Left colon (tissue), 2 donors: ENCODE measurements at regions of chr21 and their contacts with region 1.

Region 1: GRCh38 chr21:26845066-26845758 is at the start of gene ADAMTS1:
- DNase-seq: peak; percentile 51 to 72
- ATAC-seq: peak; percentile 22
- total RNA-seq, gene ADAMTS1: 12.6 to 20.6 TPM

Region 2: DNA sequence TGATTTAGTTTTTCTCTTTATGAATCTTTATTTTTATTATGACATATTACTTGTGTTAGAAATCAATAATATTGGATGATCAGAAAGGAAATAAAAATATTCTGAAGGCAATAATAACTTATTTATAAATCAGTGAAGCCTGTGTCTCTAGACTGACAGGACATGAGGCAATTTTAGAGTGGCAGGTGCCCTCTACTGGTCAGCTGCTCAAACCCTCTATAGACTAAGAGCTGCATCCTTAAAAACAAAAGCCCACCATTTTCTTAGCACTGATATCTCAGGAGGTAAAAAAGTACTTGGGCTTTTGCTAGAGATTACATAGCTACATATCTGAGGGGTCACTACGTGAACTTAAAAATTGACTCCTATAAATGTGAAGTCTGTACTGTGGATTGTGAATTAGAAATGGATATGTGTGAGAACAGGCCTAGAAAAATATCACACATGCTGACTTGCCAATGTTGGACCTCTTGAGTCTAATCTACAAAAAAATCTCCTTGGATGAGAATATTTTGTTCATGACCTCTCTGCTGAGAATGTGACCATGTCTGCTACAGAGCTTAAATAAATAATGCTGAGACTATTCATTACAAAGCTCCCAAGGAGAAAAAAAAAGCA is 719.6 kb after region 1 on chr21:
- intact Hi-C with region 1: loop called in 1 of 2 experiments (anchors 10 kb)
- DNase-seq: peak in 1 of 2 donors; percentile 56
- ATAC-seq: peak; percentile 73

Region 3: DNA sequence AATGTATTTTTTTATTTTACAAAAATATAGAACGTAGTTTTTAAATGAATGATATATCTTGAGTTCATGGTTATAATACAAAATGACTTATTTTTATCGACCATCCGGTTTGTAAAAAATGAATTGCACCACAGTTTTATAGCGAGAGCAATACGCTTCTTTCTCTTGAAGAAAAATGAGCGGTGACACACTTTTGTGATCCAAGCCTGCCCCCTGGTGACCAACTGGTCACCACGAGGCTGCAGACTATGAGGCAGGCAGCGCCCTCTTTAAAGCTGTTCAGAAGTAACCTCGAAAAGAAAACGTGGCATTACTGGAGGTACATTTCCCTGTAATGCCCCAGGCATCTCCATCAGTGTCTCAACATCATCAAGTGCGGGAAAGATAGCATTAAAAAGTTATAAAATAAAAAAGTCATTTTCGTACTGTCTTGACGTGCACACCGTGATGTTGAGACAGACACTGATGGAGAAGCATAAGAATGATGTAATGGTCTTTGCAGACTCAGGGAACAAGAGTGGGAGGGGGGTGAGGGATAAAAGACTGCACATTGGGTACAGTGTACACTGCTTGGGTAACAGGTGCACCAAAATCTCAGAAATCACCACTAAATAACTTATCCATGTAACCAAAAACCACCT is 855.9 kb after region 1 on chr21:
- intact Hi-C with region 1: loop called in 1 of 2 experiments (anchors 2 kb)
- DNase-seq: peak; percentile 72 to 89
- ATAC-seq: peak; percentile 84

Region 4: DNA sequence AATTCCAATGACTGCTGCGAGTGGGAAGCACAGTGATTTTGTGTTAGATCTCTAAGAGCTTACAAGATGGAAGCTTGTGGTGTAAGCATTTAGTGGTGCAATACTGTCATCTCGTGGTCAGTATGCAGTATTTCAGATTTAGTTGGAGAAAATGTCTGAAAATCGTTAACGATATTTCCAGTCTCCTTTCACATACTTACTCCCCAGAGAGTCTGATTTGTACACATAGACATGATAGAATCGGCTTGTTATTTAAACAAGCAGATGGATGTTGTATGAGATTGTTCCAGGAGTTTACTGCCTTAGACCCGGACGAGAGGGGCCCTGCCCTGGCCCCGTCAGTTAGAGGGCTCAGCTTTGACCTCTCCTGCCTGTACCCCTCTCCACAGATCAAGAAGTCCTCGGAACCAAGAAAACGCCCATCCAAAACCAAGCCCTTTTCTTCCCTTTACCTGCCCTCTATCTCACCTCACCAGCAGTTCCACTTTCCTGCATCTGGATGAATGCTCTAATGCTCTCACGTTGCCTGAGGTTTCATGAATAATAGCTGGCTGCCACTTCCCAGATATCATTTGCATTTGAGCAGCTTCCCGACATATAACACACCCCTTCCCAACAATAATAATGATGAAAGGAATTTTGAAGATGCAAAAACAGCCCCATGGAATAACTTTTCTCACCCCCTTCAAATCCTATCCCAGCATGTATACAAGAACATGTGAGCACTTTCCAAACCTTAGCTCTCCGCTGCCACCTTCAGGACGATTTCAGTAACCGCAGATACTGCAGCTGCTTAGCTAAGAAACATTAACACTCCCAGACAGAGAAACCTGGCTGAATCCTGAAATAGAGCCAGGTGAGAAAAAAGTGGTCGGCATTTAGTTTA is 1900.2 kb after region 1 on chr21:
- intact Hi-C with region 1: loop called in 1 of 2 experiments (anchors 5 kb)
- DNase-seq: peak; percentile 61 to 66
- ATAC-seq: peak; percentile 94